Heart right ventricle (tissue), 16 donors: ENCODE measurements at regions of chrX and their contacts with region 1.

Region 1: GRCh38 chrX:31629195-31629594 is 557.4 kb upstream of the FTHL17 start:
- DNase-seq: no peak
- ATAC-seq: peak in 1 of 8 donors; percentile 33
- H3K4me3 ChIP-seq: no peak overlapping the region
- H3K27ac ChIP-seq: no peak overlapping the region
- H3K4me1 ChIP-seq: no peaks in the 10 kb centered on the region
- H3K27me3 ChIP-seq: peaks cover 0 to 4% (median 0%) of the 10 kb centered on the region in 7 donors
- CTCF ChIP-seq: no peak

Region 2: DNA sequence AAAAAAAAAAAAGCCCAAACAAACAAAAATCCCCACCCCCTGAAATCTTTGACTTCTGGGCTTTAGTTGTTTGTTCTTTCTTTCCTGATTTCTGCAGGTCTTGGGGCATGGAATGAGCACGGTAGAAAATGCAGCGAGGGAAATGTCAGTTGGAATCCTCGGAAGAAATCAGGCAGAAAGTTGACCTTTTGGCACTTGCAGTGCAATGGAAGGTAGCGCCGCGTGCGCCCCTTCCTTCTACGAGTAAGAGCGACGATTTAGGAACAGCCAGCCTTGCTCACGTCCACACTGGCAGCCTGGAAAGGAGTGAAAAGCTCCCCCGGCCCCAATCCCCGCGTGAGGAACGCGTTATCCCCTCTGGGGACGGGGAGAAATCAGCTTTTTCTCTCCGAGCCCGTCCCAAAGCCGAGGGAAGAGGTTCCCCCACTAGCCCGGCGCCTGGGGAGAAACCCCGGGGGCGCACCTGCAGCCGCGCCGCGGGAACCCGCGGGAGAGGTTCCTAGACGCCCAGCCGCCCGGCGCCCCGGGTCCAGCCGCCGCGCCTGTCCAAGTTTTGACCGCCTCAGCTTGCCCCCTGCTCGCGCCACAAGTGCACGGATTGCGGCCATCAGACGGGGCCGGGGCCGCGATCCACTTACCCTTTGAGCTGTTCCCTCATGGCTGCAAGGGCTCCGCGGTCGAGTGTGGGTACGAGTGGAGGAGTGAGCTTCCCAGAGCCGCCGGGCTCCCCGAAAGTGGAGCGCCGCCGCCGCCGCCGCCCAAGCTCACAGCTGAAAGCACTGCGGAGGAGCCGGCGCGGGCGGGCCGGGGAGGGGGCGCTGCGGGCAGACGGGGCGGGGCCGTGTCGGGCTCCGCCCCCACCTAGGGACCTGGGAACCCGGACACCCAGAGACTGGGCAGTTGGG is 362.8 kb before region 1 on chrX:
- intact Hi-C with region 1: no loop called
- DNase-seq: peak; percentile 49 to 66
- ATAC-seq: peak; percentile 89 to 97 (median 92)
- H3K4me3 ChIP-seq: peak overlapping the region; percentile 47 to 81 (median 66)
- H3K27ac ChIP-seq: peak overlapping the region; percentile 52 to 84 (median 78)
- H3K4me1 ChIP-seq: peaks cover 0 to 9% (median 0%) of the 10 kb centered on the region in 9 donors
- H3K27me3 ChIP-seq: peaks cover 0 to 50% (median 0%) of the 10 kb centered on the region in 7 donors
- CTCF ChIP-seq: no peak

Region 3: DNA sequence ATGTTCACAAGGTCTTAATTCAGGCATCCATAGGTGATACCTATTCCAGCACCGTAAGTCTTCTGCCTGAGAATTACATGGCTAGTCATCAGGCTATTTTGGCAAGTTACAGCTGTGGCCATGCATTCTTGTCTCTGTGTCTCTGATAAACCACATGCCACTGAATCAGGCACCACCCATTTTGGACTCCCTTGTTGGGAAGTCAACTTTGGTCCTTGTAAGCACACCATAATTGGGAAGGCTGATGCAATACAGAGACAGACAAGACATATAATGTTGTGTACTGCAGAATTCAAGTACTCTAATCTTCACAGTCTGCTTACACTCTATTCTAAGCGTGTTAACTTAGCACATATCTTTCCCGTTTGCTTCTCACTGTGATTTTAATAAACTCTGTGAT is 73.7 kb before region 1 on chrX:
- intact Hi-C with region 1: no loop called
- DNase-seq: peak in 1 of 2 donors; percentile 13
- ATAC-seq: peak; percentile 61 to 95 (median 74)
- H3K4me3 ChIP-seq: no peak overlapping the region
- H3K27ac ChIP-seq: peak overlapping the region in 3 of 10 donors; percentile 44 to 63 (median 59)
- H3K4me1 ChIP-seq: no peaks in the 10 kb centered on the region
- H3K27me3 ChIP-seq: no peaks in the 10 kb centered on the region
- CTCF ChIP-seq: no peak

Region 4: GRCh38 chrX:31590581-31591113 is 38.5 kb before region 1 on chrX:
- intact Hi-C with region 1: loop called in 1 of 10 experiments (anchors 2 kb)
- DNase-seq: no peak
- ATAC-seq: peak in 2 of 8 donors; percentile 55 to 65
- H3K4me3 ChIP-seq: no peak overlapping the region
- H3K27ac ChIP-seq: no peak overlapping the region
- H3K4me1 ChIP-seq: no peaks in the 10 kb centered on the region
- H3K27me3 ChIP-seq: no peaks in the 10 kb centered on the region
- CTCF ChIP-seq: no peak

Region 5: GRCh38 chrX:31706466-31706865 is 77.3 kb after region 1 on chrX:
- intact Hi-C with region 1: no loop called
- DNase-seq: no peak
- ATAC-seq: no peak
- H3K4me3 ChIP-seq: no peak overlapping the region
- H3K27ac ChIP-seq: peak overlapping the region in 1 of 10 donors; percentile 15
- H3K4me1 ChIP-seq: peaks cover 0 to 9% (median 0%) of the 10 kb centered on the region in 9 donors
- H3K27me3 ChIP-seq: no peaks in the 10 kb centered on the region
- CTCF ChIP-seq: no peak

Region 6: GRCh38 chrX:32495855-32496254 is 866.7 kb after region 1 on chrX:
- intact Hi-C with region 1: no loop called
- DNase-seq: no peak
- ATAC-seq: no peak
- H3K4me3 ChIP-seq: no peak overlapping the region
- H3K27ac ChIP-seq: no peak overlapping the region
- H3K4me1 ChIP-seq: no peaks in the 10 kb centered on the region
- H3K27me3 ChIP-seq: peaks cover 0 to 13% (median 0%) of the 10 kb centered on the region in 7 donors
- CTCF ChIP-seq: no peak